ENCODE measurements at regions of chr2 and their contacts with region 1.

Region 1: GRCh38 chr2:168920504-168921157 is 19.5 kb downstream of the G6PC2 start:
- ATAC-seq: peak in 2 of 8 experiments; percentile 14 to 30
- H3K4me3 ChIP-seq: no peak overlapping the region
- H3K27ac ChIP-seq: no peak overlapping the region
- H3K4me1 ChIP-seq: no peaks in the 10 kb centered on the region

Region 2: DNA sequence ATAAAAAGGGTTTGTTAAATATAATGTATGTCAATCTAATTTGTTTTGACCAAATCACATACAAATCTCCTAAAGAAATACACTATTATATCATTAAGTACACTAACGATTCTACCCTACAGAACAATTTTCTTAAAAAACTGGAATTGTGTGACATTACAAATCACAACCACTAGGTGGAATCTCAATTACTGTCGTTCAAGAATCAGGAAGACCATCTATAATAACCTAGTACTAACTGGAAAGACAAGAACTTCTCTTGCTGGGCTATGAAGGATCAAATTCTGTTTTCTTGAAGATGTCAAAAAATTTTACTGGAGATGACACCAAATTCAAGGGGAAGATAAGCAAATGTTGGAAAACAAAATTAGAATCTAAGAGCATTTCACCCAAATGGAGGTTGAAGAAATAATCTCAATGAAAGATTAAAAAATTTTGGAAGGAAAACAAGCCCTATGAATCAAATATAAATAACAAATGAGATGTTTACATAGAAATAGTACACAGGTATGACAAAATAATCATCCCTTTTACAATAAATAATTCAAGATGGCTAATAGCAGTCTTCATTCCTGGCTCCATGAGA is 784.1 kb before region 1 on chr2:
- in situ Hi-C with region 1: loop called in 1 of 9 experiments (anchors 25 kb)
- ATAC-seq: peak in 1 of 8 experiments; percentile 39
- H3K4me3 ChIP-seq: no peak overlapping the region
- H3K27ac ChIP-seq: no peak overlapping the region
- H3K4me1 ChIP-seq: peaks cover 27 to 30% of the 10 kb centered on the region in 2 donors

Region 3: DNA sequence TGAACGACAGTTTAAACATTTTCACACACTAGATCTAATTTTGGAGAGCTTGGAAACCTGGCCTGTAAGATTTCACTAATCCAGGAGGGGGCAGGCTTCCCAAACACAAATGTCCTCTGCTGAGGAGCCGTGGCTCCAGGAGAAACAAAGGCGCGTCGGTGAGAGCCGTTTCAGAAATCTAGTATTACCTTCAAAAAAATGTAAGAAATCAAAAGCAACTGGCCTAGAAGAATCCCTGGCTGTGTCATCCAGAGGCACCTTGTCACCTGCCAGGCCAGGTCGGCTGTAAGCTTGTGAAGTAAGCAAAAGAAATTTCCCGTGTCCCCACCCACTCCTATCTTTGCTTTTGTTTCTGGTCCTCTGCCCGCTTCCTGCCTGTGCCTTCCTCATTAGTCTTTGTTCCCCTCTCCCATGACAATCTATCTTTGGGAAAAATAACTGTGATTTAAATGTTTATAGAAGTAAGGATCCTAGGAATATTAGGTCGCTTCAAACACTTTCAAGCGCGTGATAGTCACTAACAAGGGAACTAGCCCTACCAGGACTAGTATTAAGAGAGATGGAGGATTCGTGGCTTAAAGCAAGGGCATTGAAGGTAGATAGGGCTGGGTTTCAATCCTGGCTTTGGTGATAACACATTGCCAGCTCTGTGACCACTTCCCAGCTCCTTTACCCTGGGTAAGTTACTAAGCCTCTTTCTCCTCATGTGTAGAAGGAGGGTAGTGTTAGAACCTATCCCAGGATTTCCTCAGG is 573.7 kb before region 1 on chr2:
- in situ Hi-C with region 1: loop called in 4 of 9 experiments (anchors 25 kb)
- ATAC-seq: peak; percentile 61 to 93 (median 84)
- H3K4me3 ChIP-seq: peak overlapping the region; percentile 19 to 33 (median 27)
- H3K27ac ChIP-seq: peak overlapping the region in 1 of 2 donors; percentile 28
- H3K4me1 ChIP-seq: peaks cover 5% of the 10 kb centered on the region in 2 donors

Region 4: GRCh38 chr2:168758970-168759820 is 161.4 kb before region 1 on chr2:
- in situ Hi-C with region 1: loop called in 1 of 9 experiments (anchors 25 kb)
- ATAC-seq: peak in 5 of 8 experiments; percentile 27 to 89 (median 82)
- H3K4me3 ChIP-seq: no peak overlapping the region
- H3K27ac ChIP-seq: no peak overlapping the region
- H3K4me1 ChIP-seq: no peaks in the 10 kb centered on the region

Region 5: DNA sequence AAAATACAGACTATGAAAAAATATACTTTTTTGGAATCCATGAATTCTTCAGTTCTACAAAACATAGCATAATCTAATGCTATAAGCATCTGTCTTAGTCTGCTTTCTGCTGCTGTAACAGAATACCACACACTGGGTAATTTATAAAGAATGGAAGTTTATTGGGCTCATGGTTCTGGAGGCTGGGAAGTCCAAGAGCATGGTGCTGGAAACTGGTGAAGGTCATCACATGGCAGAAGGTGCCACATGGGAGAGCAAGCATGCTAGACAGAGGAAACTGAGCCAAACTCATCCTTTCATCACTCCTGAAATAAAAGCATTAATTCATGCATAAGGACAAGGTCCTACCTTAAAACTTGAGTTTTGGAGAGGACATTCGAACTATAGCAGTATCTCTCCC is 144.8 kb before region 1 on chr2:
- in situ Hi-C with region 1: loop called in 3 of 9 experiments (anchors 5 to 25 kb)
- ATAC-seq: no peak
- H3K4me3 ChIP-seq: no peak overlapping the region
- H3K27ac ChIP-seq: no peak overlapping the region
- H3K4me1 ChIP-seq: peaks cover 0 to 2% of the 10 kb centered on the region in 2 donors

Region 6: DNA sequence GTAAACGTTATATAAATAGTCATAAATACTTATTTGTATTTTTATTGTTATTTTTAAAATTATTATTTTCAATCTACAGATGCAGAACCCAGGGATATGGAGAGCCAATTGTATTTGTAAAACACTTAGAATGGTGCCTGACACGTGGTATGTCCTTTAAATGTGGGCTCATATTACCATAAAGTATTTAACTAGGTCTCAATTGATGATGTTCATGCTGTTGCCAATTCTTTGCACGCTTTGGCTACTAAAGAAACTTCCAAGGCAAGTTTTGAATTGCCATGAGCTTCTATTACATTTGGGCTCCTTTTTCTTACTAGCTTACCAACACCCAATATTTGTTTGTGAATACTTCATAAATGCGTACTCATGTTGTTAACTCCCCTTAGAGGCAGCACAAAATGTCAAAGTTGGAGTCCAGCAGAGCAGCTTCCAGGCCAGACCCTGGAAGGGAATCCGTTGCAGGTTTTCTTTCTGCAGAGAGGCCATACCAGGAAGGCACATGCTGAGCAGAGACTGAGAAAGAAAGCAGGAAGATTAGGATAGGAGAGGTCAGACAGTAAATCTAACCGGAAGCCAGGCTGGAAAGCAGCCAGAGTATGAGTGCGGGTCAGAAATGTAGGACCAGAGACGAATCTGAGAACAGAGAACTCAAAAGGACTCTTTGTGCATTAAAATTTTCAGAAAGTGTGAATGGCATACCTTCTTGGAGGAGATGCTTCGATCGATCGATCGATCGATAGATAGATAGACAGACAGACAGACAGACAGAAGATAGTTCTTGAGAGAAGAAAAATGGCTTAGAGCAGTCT is 122.3 kb before region 1 on chr2:
- in situ Hi-C with region 1: loop called in 1 of 9 experiments (anchors 25 kb)
- ATAC-seq: peak in 2 of 8 experiments; percentile 26 to 33
- H3K4me3 ChIP-seq: no peak overlapping the region
- H3K27ac ChIP-seq: no peak overlapping the region
- H3K4me1 ChIP-seq: peaks cover 0 to 7% of the 10 kb centered on the region in 2 donors